H1 (cell line): ENCODE measurements at regions of chr6 and their contacts with region 1.

Region 1: GRCh38 chr6:135183532-135184440 is 2.7 kb downstream of the MYB start:
- DNase-seq: peak in 1 of 2 experiments; percentile 79
- H3K4me3 ChIP-seq: peak overlapping the region; percentile 62 to 86 (median 76)
- H3K27ac ChIP-seq: no peak overlapping the region
- H3K4me1 ChIP-seq: peaks cover 0 to 7% (median 2%) of the 10 kb centered on the region in 4 experiments; a peak in 2 of 7 replicates
- H3K27me3 ChIP-seq: peaks cover 0 to 26% (median 18%) of the 10 kb centered on the region in 4 experiments; a peak in 6 of 7 replicates
- CTCF ChIP-seq: peak; percentile 72 to 86 (median 85)
- EP300 ChIP-seq: no peak
- POLR2A ChIP-seq: no peak
- RAD21 ChIP-seq: peak; percentile 70 to 81

Region 2: GRCh38 chr6:135162678-135163439 is 20.9 kb before region 1 on chr6:
- CTCF ChIA-PET with region 1: interaction called, 38 read pairs
- POLR2A ChIA-PET with region 1: interaction called, 4 read pairs
- DNase-seq: peak; percentile 77 to 93
- H3K4me3 ChIP-seq: no peak overlapping the region
- H3K27ac ChIP-seq: no peak overlapping the region
- H3K4me1 ChIP-seq: 0 out of 7 replicates have a peak, but pooled peaks cover 0 to 2% (median 0%) of the 10 kb centered on the region in 4 experiments
- H3K27me3 ChIP-seq: no peaks in the 10 kb centered on the region
- CTCF ChIP-seq: peak; percentile 65 to 88 (median 83)
- EP300 ChIP-seq: no peak
- POLR2A ChIP-seq: no peak
- RAD21 ChIP-seq: peak; percentile 42 to 54